T-cell (primary cell): ENCODE measurements at regions of chr4 and their contacts with region 1.

Region 1: GRCh38 chr4:7179158-7179557 is 13.2 kb upstream of the SORCS2 start:
- DNase-seq: no peak
- ATAC-seq: no peak
- H3K4me3 ChIP-seq: no peak overlapping the region
- H3K4me3 Mint-ChIP-seq: no peak overlapping the region
- H3K27ac ChIP-seq: no peak overlapping the region
- H3K27ac Mint-ChIP-seq: no peak overlapping the region
- H3K4me1 ChIP-seq: no peaks in the 10 kb centered on the region
- H3K4me1 Mint-ChIP-seq: peaks cover 2 to 6% (median 4%) of the 10 kb centered on the region in 3 donors
- H3K27me3 ChIP-seq: peaks cover 2 to 5% of the 10 kb centered on the region in 2 experiments
- H3K27me3 Mint-ChIP-seq: peaks cover 11 to 20% of the 10 kb centered on the region in 2 donors

Region 2: DNA sequence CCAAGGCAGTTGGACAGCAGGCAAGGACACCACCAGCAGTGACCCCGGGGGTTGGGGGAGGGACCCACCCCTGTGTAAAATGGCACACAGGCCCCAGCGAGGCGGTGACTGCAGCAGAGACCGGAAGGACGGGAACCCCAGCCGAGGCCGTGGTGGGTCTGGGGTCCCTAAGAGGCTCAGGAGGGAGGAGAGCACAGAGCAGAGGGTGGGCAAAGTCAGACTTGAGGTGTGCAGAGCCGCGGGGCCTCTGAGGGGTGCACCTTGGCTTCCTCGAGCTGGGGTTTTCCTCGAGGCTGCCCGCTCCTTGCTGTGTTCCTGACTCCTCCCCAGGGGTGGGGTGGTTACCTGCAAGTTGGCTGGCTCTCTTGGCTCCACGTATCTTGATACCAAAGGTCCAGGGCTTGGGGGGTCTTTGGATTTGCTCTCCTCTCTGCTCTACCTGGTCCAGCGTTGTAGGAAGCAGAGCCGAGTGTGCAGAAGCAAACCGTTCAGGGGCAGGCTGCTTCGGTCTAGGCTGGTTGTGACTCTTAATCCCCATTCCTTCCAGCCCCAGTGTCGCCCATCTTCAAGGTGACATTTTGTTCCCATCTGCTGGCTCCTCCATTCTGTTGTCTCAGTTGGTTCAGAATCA is 24.7 kb before region 1 on chr4:
- CTCF ChIA-PET with region 1: interaction called in 1 of 2 experiments, 15 read pairs
- POLR2A ChIA-PET with region 1: no interaction called
- DNase-seq: no peak
- ATAC-seq: no peak
- H3K4me3 ChIP-seq: no peak overlapping the region
- H3K4me3 Mint-ChIP-seq: no peak overlapping the region
- H3K27ac ChIP-seq: no peak overlapping the region
- H3K27ac Mint-ChIP-seq: no peak overlapping the region
- H3K4me1 ChIP-seq: no peaks in the 10 kb centered on the region
- H3K4me1 Mint-ChIP-seq: no peaks in the 10 kb centered on the region
- H3K27me3 ChIP-seq: peaks cover 0 to 51% of the 10 kb centered on the region in 2 experiments
- H3K27me3 Mint-ChIP-seq: peaks cover 20 to 31% of the 10 kb centered on the region in 2 donors